AG04449 (cell line): ENCODE measurements at regions of chr20 and their contacts with region 1.

Region 1: GRCh38 chr20:58890518-58891085 is 38.1 kb downstream of the GNAS start:
- DNase-seq: no peak
- H3K4me3 ChIP-seq: peak overlapping the region; percentile 71
- CTCF ChIP-seq: no peak

Region 2: DNA sequence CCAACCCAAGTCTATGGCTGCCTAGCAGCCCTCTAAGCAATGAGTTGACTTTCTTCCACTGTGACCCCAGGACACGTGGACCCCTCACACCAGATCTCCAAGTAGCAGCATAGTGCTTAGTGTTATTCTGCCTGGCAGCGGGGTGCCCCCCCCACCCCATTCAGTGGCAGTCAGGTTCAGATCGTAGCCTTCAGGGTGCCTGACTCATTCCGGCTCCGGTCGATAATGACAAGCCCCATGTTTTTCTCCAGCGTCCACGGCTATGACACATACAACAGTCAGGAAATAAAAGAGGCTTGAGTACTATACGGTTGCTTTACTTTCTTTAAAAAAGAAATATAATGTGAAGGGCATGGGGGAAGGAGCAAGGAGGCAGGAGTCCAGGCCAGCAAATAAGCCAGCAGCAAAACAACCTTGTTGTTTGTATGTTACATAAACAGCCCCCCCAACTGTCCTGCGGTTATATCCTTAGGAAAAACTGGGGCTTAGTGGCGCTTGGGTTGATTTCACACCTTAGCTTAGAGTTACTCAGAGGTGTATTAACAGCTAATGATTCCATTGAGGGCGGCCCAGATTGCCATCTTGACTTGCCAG is 15.0 kb before region 1 on chr20:
- CTCF ChIA-PET with region 1: interaction called, 26 read pairs
- POLR2A ChIA-PET with region 1: interaction called, 3 read pairs
- DNase-seq: no peak
- H3K4me3 ChIP-seq: no peak overlapping the region
- CTCF ChIP-seq: no peak

Region 3: DNA sequence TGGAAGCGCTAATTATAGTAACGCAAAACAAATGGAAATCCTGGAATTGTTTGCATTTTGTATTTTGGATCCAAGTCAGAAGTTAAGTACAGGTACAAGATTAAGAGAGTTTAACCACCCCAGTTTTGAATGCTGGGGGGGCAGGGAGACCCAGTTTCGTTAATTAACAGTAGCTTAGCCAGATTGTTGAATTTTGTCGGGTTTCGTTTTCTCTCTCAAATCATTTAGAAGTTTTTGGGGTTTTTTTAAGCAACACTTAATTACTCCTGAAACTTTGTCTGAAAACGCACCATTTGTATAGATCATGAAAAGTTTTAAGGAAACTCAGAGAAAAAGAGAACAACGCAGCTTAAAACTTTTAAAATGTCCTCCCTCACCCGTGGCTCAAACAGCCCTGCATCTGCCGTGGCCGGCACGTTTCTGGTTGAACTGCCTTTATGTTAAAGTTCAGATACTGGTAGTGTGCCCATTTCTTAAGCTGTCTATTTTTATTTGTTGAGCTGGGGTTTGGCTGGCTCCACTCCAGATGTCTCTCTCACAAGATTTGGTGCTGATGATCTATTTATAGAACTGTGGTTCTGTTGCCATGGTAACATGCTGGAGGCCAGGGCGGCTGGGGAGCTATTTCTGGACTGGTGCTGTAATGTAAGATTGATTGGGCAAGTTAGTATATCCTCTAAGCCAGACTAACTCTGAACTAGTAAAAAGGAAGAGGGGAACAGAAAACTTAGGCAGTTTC is 17.0 kb after region 1 on chr20:
- CTCF ChIA-PET with region 1: no interaction called
- POLR2A ChIA-PET with region 1: interaction called, 11 read pairs
- DNase-seq: peak; percentile 97
- H3K4me3 ChIP-seq: peak overlapping the region; percentile 18; the same call in 1 of the 2 replicates
- CTCF ChIP-seq: no peak

Region 4: GRCh38 chr20:59032023-59032712 is 141.6 kb after region 1 on chr20 and contains the start of gene ATP5F1E:
- CTCF ChIA-PET with region 1: no interaction called
- POLR2A ChIA-PET with region 1: interaction called, 13 read pairs
- DNase-seq: no peak
- H3K4me3 ChIP-seq: peak within 1 kb of the TSS; percentile 79
- CTCF ChIP-seq: no peak